ENCODE measurements at regions of chr17 and their contacts with region 1.

Region 1: DNA sequence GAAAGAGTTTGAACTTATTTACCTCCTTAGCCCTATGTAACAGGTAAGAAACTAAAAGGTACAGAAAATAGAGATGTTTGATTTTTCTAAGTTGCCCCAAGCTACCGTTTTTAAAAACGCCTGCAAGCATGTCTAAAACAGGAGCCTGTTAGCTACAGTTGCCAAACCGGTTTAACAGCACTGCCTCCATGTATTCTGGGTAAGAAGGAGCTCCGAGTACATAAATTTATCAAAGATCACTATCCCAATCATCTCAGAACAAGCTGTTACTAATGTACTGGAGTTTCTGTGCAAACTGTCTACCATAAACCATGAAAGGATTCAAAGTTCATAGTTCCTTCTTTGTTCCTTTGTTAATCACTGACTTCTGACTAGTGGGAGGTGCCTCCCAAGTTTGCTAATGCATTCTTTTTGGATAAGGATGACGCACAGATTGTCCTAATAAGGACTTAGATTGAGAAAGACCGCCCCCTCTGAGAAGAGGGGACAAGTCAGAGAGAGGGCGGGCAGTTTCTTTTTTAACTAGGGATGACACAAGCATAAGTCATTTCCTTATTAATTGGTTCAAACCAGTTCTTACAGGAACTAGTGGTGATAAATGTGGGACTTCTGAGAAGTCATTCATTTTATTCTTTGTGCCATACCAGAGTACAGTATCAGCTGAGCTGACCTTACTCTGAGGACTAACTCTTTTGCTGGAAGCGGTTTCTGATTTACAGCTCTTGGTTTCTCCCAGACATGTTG is 55.3 kb downstream of the TUBD1 start:
- DNase-seq: peak; percentile 81 to 100
- ATAC-seq: peak; percentile 74 to 82
- H3K4me3 ChIP-seq: peak overlapping the region; percentile 57
- H3K27ac ChIP-seq: peak overlapping the region; percentile 94 to 96
- H3K4me1 ChIP-seq: peaks cover 30% of the 10 kb centered on the region
- CTCF ChIP-seq: no peak
- EP300 ChIP-seq: peak; percentile 100
- POLR2A ChIP-seq: no peak; the same call in 1 of the 2 replicates
- RAD21 ChIP-seq: peak; percentile 10 to 59; a peak in 3 of 5 replicates

Region 2: GRCh38 chr17:59762513-59763374 is 74.7 kb before region 1 on chr17:
- CTCF ChIA-PET with region 1: interaction called, 3 read pairs
- POLR2A ChIA-PET with region 1: interaction called, 23 read pairs
- DNase-seq: peak in 1 of 2 experiments; percentile 59
- ATAC-seq: 0 out of 6 replicates have a peak, but pooled peaks of 1 of the 2 experiments have one; percentile 12
- H3K4me3 ChIP-seq: no peak overlapping the region
- H3K27ac ChIP-seq: peak overlapping the region; percentile 94 to 95
- H3K4me1 ChIP-seq: peaks cover 56% of the 10 kb centered on the region
- CTCF ChIP-seq: no peak
- EP300 ChIP-seq: no peak
- POLR2A ChIP-seq: no peak
- RAD21 ChIP-seq: no peak

Region 3: GRCh38 chr17:59786536-59787319 is 50.8 kb before region 1 on chr17:
- CTCF ChIA-PET with region 1: interaction called, 10 read pairs
- POLR2A ChIA-PET with region 1: interaction called, 610 read pairs
- DNase-seq: peak; percentile 81 to 100
- ATAC-seq: peak; percentile 88 to 92
- H3K4me3 ChIP-seq: no peak overlapping the region
- H3K27ac ChIP-seq: peak overlapping the region; percentile 94 to 98
- H3K4me1 ChIP-seq: peaks cover 92% of the 10 kb centered on the region
- CTCF ChIP-seq: no peak
- EP300 ChIP-seq: peak; percentile 99 to 100
- POLR2A ChIP-seq: no peak
- RAD21 ChIP-seq: peak; percentile 43 to 68

Region 4: GRCh38 chr17:59804901-59805465 is 32.5 kb before region 1 on chr17:
- CTCF ChIA-PET with region 1: interaction called, 4 read pairs
- POLR2A ChIA-PET with region 1: interaction called, 127 read pairs
- DNase-seq: peak in 1 of 2 experiments; percentile 89
- ATAC-seq: peak in 1 of 2 experiments; percentile 29; a peak in 3 of 6 replicates
- H3K4me3 ChIP-seq: peak overlapping the region; percentile 4; the same call in 1 of the 3 replicates
- H3K27ac ChIP-seq: peak overlapping the region; percentile 90 to 92
- H3K4me1 ChIP-seq: peaks cover 85% of the 10 kb centered on the region
- CTCF ChIP-seq: no peak
- EP300 ChIP-seq: no peak
- POLR2A ChIP-seq: no peak
- RAD21 ChIP-seq: no peak

Region 5: DNA sequence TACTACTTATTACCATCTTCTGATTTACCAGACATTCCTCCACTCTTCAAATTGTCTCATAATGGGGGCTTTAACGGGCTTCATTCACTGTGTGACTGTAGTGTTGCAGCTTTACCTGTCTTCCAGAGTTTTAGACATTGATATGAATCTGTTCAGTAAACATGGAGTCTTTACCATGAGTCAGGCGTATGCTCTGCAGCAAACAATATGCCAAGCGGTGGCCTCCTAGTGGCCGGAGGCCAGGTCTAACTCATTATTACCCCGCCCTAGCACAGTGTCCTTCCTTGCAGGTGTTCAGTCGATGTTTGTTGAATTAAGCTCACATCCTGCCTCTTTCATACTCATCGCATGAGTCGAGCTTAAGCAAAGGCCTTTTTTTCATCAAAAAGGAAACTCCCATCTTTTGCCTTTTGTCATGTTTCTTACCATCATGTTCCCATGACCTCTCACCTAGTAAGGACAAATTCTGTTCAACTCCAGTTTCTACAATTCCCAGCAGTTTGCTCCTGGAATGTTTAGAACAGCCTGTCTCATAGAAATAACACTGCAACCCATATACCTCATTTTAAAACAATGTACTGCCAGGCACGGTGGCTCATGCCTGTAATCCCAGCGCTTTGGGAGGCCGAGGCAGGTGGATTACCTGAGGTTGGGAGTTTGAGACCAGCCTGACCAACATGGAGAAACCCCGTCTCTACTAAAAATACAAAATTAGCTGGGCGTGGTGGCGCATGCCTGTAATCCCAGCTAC is 15.9 kb after region 1 on chr17:
- CTCF ChIA-PET with region 1: interaction called, 10 read pairs
- POLR2A ChIA-PET with region 1: interaction called, 3 read pairs
- DNase-seq: peak; percentile 86 to 100
- ATAC-seq: peak; percentile 82 to 88
- H3K4me3 ChIP-seq: no peak overlapping the region
- H3K27ac ChIP-seq: peak overlapping the region; percentile 91 to 96
- H3K4me1 ChIP-seq: peaks cover 96% of the 10 kb centered on the region
- CTCF ChIP-seq: peak; percentile 67
- EP300 ChIP-seq: peak; percentile 95 to 97
- POLR2A ChIP-seq: no peak
- RAD21 ChIP-seq: peak; percentile 64 to 71

Measured in A549 (cell line).